ENCODE measurements at regions of chr2 and their contacts with region 1.

Region 1: DNA sequence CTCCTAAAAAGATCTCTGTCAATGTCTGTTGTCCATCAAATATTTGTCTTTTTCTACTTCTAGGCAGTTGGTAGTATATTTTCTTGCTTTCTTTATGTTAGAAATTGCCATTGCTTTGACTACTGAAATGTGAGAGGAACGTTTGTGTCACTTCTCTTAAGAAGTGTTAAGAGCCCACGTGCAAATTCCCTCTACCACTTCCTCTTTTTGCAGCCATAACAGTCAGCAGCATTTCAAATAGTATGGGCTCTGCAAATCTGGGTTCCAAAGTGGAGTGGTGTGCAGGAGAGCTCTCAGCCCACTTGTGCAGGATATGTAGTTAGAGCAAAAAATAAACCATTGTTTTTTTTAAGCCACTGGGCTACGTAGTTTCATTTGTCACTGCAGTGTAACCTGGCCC is 314.0 kb downstream of the MEIS1 start:
- DNase-seq: no peak
- H3K4me3 ChIP-seq: no peak overlapping the region
- H3K27ac ChIP-seq: peak overlapping the region in 3 of 4 donors; percentile 62 to 80 (median 69)
- H3K4me1 ChIP-seq: peaks cover 0 to 56% (median 27%) of the 10 kb centered on the region in 4 donors
- H3K27me3 ChIP-seq: no peaks in the 10 kb centered on the region
- CTCF ChIP-seq: no peak
- EP300 ChIP-seq: no peak
- POLR2A ChIP-seq: no peak

Region 2: GRCh38 chr2:66729416-66730300 is 19.3 kb before region 1 on chr2:
- intact Hi-C with region 1: loop called (anchors 2 kb)
- DNase-seq: no peak
- H3K4me3 ChIP-seq: no peak overlapping the region
- H3K27ac ChIP-seq: peak overlapping the region in 3 of 4 donors; percentile 19 to 54 (median 32)
- H3K4me1 ChIP-seq: peaks cover 0 to 30% (median 21%) of the 10 kb centered on the region in 4 donors
- H3K27me3 ChIP-seq: no peaks in the 10 kb centered on the region
- CTCF ChIP-seq: no peak
- EP300 ChIP-seq: no peak
- POLR2A ChIP-seq: no peak

Region 3: GRCh38 chr2:66962625-66963207 is 213.8 kb after region 1 on chr2:
- intact Hi-C with region 1: no loop called
- DNase-seq: peak; percentile 94
- H3K4me3 ChIP-seq: no peak overlapping the region
- H3K27ac ChIP-seq: peak overlapping the region; percentile 44 to 87 (median 82)
- H3K4me1 ChIP-seq: peaks cover 0 to 51% (median 26%) of the 10 kb centered on the region in 4 donors
- H3K27me3 ChIP-seq: no peaks in the 10 kb centered on the region
- CTCF ChIP-seq: no peak
- EP300 ChIP-seq: peak; percentile 58 to 93 (median 78)
- POLR2A ChIP-seq: no peak

Region 4: DNA sequence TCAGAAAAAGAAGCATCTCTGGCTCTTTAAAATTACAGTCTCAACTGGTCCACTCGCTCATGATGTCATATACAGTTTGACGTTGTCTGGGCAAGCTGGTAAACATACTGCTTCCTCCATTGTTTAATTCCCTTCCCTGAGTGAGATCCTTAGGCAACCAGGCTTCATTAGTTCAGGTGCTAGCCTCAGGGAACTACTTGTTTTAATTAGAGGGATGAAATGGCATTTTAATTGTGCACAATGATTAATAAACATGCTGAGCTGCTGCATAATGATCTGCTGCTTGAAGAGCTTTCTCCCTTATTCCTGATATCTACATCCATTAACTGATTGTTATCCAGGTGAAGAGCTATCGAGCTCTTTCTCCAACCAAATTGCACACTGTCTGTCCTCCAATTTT is 452.6 kb after region 1 on chr2:
- intact Hi-C with region 1: no loop called
- DNase-seq: no peak
- H3K4me3 ChIP-seq: no peak overlapping the region
- H3K27ac ChIP-seq: no peak overlapping the region
- H3K4me1 ChIP-seq: no peaks in the 10 kb centered on the region
- H3K27me3 ChIP-seq: no peaks in the 10 kb centered on the region
- CTCF ChIP-seq: no peak
- EP300 ChIP-seq: no peak
- POLR2A ChIP-seq: no peak

Measured in sigmoid colon (tissue), 7 donors.